Endothelial cell of umbilical vein (primary cell): ENCODE measurements at regions of chr18 and their contacts with region 1.

Region 1: GRCh38 chr18:74994502-74995419 is 214.2 kb downstream of the PTGR3 start:
- DNase-seq: peak; percentile 75
- H3K4me3 ChIP-seq: peak overlapping the region in 1 of 3 experiments; percentile 19
- H3K27ac ChIP-seq: peak overlapping the region; percentile 82
- H3K4me1 ChIP-seq: peaks cover 39% of the 10 kb centered on the region
- H3K27me3 ChIP-seq: no peaks in the 10 kb centered on the region
- CTCF ChIP-seq: no peak
- POLR2A ChIP-seq: peak; percentile 39

Region 2: DNA sequence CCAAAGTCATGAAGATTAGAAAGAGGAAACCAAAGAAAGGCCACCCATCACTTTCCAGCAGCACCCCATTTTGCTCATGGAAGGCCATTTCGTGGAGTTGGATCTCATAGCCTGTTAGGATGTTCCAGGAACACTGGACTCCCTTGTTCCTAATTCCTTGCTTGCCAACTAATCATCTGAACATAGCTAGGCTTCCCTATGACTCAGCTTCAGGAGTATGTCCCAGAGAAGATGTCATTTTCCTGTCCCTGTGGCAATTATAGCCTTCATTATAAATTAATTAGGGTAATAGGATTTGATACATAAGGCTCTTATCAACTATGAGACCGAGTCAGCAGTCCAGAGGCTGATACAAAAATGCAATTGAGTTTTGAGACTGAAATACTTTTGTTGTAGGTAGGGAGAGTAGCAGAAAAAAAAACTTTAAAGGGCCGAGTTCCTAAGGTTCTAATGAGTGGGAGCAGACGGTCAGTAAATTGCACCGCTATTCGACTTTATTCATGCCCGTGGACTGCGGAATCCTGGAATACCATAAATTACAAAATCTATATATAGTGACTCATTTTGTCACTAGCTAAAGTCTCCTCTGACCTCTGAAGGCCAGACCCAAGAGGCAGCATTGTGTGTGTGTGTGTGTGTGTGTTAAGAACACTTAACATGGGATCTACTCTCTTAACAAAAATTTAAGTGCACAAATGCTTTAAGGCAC is 1159.0 kb before region 1 on chr18:
- CTCF ChIA-PET with region 1: no interaction called
- POLR2A ChIA-PET with region 1: no interaction called
- dilution Hi-C with region 1: no loop called
- intact Hi-C with region 1: no loop called
- DNase-seq: no peak
- H3K4me3 ChIP-seq: no peak overlapping the region
- H3K27ac ChIP-seq: no peak overlapping the region
- H3K4me1 ChIP-seq: no peaks in the 10 kb centered on the region
- H3K27me3 ChIP-seq: no peaks in the 10 kb centered on the region
- CTCF ChIP-seq: no peak
- POLR2A ChIP-seq: no peak

Region 3: GRCh38 chr18:74982946-74983635 is 11.7 kb before region 1 on chr18:
- CTCF ChIA-PET with region 1: interaction called, 4 read pairs
- POLR2A ChIA-PET with region 1: no interaction called
- dilution Hi-C with region 1: no loop called
- intact Hi-C with region 1: loop called (anchors 1 kb)
- DNase-seq: peak; percentile 73
- H3K4me3 ChIP-seq: no peak overlapping the region
- H3K27ac ChIP-seq: peak overlapping the region; percentile 28
- H3K4me1 ChIP-seq: no peaks in the 10 kb centered on the region
- H3K27me3 ChIP-seq: no peaks in the 10 kb centered on the region
- CTCF ChIP-seq: no peak
- POLR2A ChIP-seq: no peak

Region 4: GRCh38 chr18:75070625-75071483 is 76.1 kb after region 1 on chr18:
- CTCF ChIA-PET with region 1: interaction called, 3 read pairs
- POLR2A ChIA-PET with region 1: interaction called, 3 read pairs
- dilution Hi-C with region 1: no loop called
- intact Hi-C with region 1: loop called (anchors 1 kb)
- DNase-seq: peak; percentile 94
- H3K4me3 ChIP-seq: peak overlapping the region in 1 of 3 experiments; percentile 45
- H3K27ac ChIP-seq: peak overlapping the region; percentile 99
- H3K4me1 ChIP-seq: peaks cover 44% of the 10 kb centered on the region
- H3K27me3 ChIP-seq: no peaks in the 10 kb centered on the region
- CTCF ChIP-seq: no peak
- POLR2A ChIP-seq: peak; percentile 68